ENCODE measurements at regions of chr20 and their contacts with region 1.

Region 1: DNA sequence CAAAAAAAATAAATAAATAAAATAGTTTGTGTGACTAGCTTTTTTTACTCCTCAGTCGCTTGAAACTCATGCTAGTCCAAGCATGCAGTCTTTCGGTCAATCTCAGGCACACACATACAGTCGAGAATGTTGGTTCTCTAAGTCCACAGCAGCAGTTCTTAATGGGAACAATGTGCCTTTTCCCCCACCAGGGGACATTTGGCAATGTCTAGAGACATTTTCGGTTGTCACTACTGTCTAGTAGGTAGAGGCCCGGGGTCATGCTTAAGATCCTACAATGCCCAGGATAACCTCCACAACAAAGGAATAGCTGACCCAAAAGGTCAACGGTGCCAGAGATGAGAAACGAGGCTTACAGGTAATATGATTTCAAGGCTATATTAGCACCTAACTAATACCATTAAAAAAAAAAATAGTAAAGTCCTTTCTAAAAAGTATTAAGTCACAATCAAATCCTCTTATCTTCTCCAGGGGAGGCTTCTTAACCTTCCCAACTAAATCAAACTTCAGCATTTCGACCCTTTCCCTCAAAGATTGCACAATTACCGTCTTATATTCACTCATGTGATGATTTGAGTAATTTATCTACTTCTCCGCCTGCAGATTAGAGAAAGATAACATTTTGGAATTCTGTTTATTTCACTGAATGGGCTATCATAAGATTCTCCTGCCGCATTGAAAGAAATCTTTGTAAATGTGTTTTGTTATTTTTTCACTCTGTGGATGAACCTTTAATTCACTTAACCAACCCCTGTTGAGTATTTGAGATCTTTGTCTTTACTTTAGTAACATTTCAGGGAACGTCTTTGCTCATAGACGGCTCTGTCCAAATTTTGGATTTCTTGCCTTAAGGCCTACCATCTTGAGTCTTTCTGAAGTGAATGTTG is 8.1 kb upstream of the SALL4 start:
- DNase-seq: no peak
- H3K4me3 ChIP-seq: no peak overlapping the region
- H3K27ac ChIP-seq: no peak overlapping the region
- H3K4me1 ChIP-seq: no peaks in the 10 kb centered on the region
- H3K27me3 ChIP-seq: no peaks in the 10 kb centered on the region
- CTCF ChIP-seq: no peak
- EP300 ChIP-seq: no peak
- POLR2A ChIP-seq: no peak

Region 2: DNA sequence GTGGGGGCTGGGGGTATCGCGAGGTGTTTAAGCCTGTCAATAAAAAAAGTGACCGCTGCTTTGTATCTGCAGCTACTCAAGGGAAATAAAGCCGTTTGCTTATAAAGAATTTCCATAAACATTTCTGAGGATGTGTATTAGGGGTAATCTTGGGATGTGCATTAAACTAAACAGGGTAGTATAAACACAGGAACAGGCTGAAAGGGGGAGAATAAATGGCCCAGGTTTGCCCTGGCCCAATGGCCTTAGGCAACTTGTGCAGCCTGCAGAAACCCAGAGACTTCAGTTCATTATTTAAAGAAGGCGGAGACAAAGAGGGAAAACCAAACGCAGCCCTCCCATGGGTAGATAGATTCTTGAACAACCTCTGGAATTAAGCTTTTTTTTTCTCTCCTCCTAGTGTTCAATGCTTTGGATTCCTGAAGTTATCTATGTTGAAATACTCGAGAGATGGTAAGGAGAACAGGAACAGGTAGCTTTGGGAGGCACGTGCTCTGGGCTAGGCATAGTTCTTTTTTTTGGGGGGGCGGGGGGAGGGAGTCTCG is 27.6 kb after region 1 on chr20:
- intact Hi-C with region 1: loop called in 1 of 4 experiments (anchors 1 kb)
- DNase-seq: no peak
- H3K4me3 ChIP-seq: no peak overlapping the region
- H3K27ac ChIP-seq: no peak overlapping the region
- H3K4me1 ChIP-seq: no peaks in the 10 kb centered on the region
- H3K27me3 ChIP-seq: no peaks in the 10 kb centered on the region
- CTCF ChIP-seq: no peak
- EP300 ChIP-seq: no peak
- POLR2A ChIP-seq: no peak